ENCODE measurements at regions of chr5 and their contacts with region 1.

Region 1: GRCh38 chr5:176388444-176389134 is at the starts of genes HIGD2A and NOP16:
- DNase-seq: peak; percentile 96 to 100
- H3K4me3 ChIP-seq: peak within 1 kb of the TSS; percentile 67
- H3K27ac ChIP-seq: peak within 1 kb of the TSS; percentile 92
- H3K4me1 ChIP-seq: peaks cover 6 to 16% of the 10 kb centered on the region in 2 donors
- H3K27me3 ChIP-seq: no peaks in the 10 kb centered on the region
- CTCF ChIP-seq: no peak
- total RNA-seq, gene HIGD2A: 36.7 TPM
- total RNA-seq, gene NOP16: not detected

Region 2: GRCh38 chr5:176361437-176362232 is 27.0 kb before region 1 on chr5 and contains the start of gene KIAA1191:
- intact Hi-C with region 1: loop called (anchors 1 kb)
- DNase-seq: peak; percentile 83 to 97
- H3K4me3 ChIP-seq: peak within 1 kb of the TSS; percentile 97 to 99
- H3K27ac ChIP-seq: peak within 1 kb of the TSS; percentile 70 to 78
- H3K4me1 ChIP-seq: peaks cover 0 to 16% of the 10 kb centered on the region in 2 donors
- H3K27me3 ChIP-seq: no peaks in the 10 kb centered on the region
- CTCF ChIP-seq: peak in 1 of 3 experiments; percentile 29
- total RNA-seq, gene KIAA1191: 56.2 TPM

Region 3: GRCh38 chr5:176415952-176416924 is 27.6 kb after region 1 on chr5 and contains the start of gene CLTB:
- intact Hi-C with region 1: loop called (anchors 1 kb)
- DNase-seq: peak; percentile 49 to 94
- H3K4me3 ChIP-seq: peak within 1 kb of the TSS; percentile 64 to 71
- H3K27ac ChIP-seq: peak within 1 kb of the TSS; percentile 80 to 92
- H3K4me1 ChIP-seq: peaks cover 0 to 32% of the 10 kb centered on the region in 2 donors
- H3K27me3 ChIP-seq: no peaks in the 10 kb centered on the region
- CTCF ChIP-seq: peak; percentile 23 to 97 (median 54)
- total RNA-seq, gene CLTB: 189 TPM

Region 4: DNA sequence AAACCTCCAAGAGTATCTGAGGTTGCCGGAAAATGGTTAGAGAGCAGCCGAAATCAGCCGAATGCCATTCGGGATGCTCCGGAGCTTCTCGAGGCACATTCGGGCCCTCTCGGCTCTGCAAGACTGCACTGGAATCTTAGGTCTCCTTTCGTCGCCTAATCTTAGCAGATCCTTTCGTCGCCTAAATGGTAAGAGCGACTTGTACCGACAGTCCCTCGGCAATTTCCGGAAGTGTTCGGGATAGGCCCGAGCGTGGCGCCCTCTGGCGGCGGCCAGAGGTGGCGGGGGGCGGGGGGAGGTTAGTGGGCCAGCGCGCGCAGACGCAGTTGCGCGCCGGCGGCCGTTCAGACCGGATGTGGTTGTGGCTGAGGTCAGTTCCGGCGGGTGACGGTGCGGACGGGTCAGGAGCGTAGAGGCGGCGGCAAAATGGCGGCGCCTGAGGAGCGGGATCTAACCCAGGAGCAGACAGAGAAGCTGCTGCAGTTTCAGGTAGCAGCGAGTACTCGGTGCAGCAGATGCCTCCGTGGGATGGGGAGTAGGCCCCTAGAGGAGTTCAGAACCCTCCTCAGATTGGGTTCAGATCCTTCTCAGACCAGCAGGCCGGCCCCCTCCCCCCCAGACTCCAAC is 59.5 kb after region 1 on chr5 and contains the start of gene FAF2:
- intact Hi-C with region 1: loop called (anchors 1 kb)
- DNase-seq: peak; percentile 87 to 98
- H3K4me3 ChIP-seq: peak within 1 kb of the TSS; percentile 88 to 94
- H3K27ac ChIP-seq: peak within 1 kb of the TSS; percentile 91 to 92
- H3K4me1 ChIP-seq: peaks cover 6 to 17% of the 10 kb centered on the region in 2 donors
- H3K27me3 ChIP-seq: no peaks in the 10 kb centered on the region
- CTCF ChIP-seq: peak; percentile 97 to 98 (median 97)
- total RNA-seq, gene FAF2: 18.7 TPM

Region 5: GRCh38 chr5:176537608-176538504 is 149.3 kb after region 1 on chr5:
- intact Hi-C with region 1: loop called (anchors 1 kb)
- DNase-seq: peak; percentile 100
- H3K4me3 ChIP-seq: peak overlapping the region; percentile 76 to 85
- H3K27ac ChIP-seq: peak overlapping the region; percentile 91 to 97
- H3K4me1 ChIP-seq: peaks cover 10 to 42% of the 10 kb centered on the region in 2 donors
- H3K27me3 ChIP-seq: no peaks in the 10 kb centered on the region
- CTCF ChIP-seq: no peak

Region 6: DNA sequence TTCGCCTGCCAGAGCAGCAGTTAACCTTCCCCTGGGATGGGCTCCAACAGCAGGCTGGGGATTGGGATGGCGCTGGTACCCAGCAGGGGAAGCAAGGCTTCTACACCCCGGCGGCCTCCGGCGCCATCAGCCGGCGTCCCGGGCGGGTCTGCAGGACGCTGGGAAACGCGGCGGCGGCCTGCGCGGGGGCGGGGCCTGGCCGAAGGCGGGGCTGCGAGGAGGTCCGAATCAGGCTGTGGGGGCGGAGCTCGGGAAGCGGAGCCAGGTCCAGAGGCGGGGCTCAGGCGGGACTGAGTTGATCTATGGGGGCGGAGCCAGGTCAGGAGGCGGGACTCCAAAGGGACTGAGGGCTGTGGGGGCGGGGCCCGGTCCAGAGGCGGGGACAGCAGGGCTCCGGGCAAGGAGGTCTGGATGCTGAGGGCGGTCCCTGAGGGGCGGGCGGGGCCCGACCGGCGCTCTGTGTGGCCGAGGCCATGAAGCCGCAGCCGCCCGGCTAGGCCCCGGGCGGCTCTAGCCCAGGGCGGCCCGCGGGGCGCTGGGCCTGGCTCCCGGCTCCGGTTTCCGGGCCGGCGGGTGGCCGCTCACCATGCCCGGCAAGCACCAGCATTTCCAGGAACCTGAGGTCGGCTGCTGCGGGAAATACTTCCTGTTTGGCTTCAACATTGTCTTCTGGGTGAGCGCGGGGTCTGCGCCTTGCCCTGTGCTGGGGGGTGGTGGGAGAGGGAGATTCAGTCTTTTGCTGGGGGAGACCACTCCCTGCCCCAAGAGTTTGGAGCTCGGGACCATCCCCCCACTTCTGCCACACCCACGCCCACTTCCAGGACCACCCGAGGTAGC is 258.7 kb after region 1 on chr5 and contains the start of gene TSPAN17:
- intact Hi-C with region 1: loop called (anchors 10 kb)
- DNase-seq: peak; percentile 98 to 100
- H3K4me3 ChIP-seq: peak within 1 kb of the TSS; percentile 74 to 75
- H3K27ac ChIP-seq: peak within 1 kb of the TSS; percentile 76 to 79
- H3K4me1 ChIP-seq: peaks cover 3 to 10% of the 10 kb centered on the region in 2 donors
- H3K27me3 ChIP-seq: no peaks in the 10 kb centered on the region
- CTCF ChIP-seq: peak in 1 of 3 experiments; percentile 42
- total RNA-seq, gene TSPAN17: 32.7 TPM

Region 7: GRCh38 chr5:177006265-177006972 is 617.8 kb after region 1 on chr5 and contains the start of gene UIMC1:
- intact Hi-C with region 1: loop called (anchors 10 kb)
- DNase-seq: peak; percentile 42 to 94
- H3K4me3 ChIP-seq: peak within 1 kb of the TSS; percentile 81 to 94
- H3K27ac ChIP-seq: peak within 1 kb of the TSS; percentile 93 to 97
- H3K4me1 ChIP-seq: peaks cover 0 to 7% of the 10 kb centered on the region in 2 donors
- H3K27me3 ChIP-seq: no peaks in the 10 kb centered on the region
- CTCF ChIP-seq: no peak
- total RNA-seq, gene UIMC1: 32.5 TPM